IMR-90 (cell line): ENCODE measurements at regions of chr11 and their contacts with region 1.

Region 1: DNA sequence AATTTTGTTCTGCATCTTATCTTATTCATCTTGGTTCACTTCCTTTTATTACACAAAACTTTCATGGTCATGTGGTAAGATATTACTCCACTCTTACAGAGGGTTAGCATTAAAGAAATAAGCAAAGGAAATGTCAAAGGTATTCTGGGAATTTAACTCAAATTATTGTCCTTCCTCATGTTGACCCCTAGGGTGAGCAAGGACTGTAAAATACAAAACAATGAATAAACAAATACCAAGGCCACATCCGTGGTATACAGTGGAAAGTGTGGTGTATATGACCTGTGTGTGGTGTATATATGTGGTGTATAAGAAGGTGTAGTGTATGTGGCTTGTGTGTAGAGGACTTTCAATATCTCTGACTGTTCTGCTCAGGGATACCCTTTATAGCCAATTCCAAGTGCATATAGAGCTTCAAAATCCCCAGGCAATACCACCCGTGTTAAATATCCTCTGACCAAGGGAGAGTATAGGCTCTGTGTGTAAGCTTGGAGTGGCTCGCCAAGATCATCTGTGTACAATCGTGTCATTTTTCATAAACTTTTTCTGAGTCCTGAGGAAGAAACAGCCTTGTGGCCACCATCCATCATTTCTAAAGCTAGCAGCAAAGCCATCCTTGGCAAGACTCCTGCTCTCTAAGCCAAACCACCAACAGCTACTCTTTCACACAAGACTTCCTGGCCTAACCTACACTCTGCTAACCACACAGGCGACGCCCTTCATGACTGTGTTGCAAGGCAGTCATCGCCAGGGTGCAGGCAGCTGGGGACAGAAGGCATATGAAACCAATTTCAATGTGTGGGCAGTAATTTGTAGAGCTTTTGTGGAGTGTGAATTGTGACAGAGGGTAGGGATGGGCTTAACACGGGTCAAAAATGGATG is 548.0 kb downstream of the ETS1 start:
- DNase-seq: peak; percentile 82
- ATAC-seq: peak; percentile 77
- H3K4me3 ChIP-seq: no peak overlapping the region
- H3K27ac ChIP-seq: no peak overlapping the region
- H3K4me1 ChIP-seq: peaks cover 13% of the 10 kb centered on the region
- H3K27me3 ChIP-seq: peaks cover 3% of the 10 kb centered on the region; the same call in 1 of the 2 replicates
- CTCF ChIP-seq: 0 out of 2 replicates have a peak, but pooled peaks have one; percentile 5
- POLR2A ChIP-seq: no peak
- RAD21 ChIP-seq: no peak

Region 2: DNA sequence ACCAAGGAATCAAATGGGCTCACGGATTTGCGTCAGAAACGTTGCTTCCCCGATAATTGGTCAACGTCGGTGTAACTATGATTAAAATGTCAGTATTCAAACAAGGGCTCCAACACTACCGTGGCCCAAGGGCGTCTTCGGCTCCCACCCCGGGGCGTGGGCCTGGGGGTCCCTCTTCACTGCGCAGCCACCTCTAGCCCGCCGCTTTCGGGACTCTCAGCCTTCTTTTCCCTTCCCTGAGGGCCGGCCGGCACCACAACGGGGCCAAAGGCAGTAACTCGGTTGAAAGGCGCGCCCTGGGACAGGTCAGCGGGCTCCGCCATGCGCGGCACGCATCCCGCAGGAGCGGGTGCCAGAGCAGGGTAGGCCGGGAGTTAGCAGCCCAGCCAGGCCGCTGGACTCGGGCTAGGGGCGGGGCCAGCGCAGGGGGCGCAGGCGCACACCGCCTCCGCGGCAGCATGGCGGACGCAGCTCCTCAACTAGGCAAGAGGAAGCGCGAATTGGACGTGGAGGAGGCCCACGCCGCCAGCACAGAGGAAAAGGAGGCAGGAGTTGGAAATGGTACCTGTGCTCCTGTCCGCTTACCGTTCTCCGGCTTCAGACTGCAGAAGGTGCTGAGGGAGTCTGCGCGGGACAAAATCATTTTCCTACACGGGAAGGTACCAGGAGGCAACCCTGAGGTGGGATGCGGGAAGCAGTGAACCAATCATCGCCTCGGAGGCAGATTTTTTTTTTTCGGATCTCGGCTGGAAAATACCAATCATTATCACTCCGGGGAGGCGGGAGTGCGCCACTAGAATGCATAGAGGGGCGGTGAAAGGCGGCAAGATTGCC is 1735.5 kb before region 1 on chr11 and contains the start of gene DCPS:
- CTCF ChIA-PET with region 1: no interaction called
- POLR2A ChIA-PET with region 1: no interaction called
- dilution Hi-C with region 1: no loop called
- in situ Hi-C with region 1: no loop called
- intact Hi-C with region 1: loop called (anchors 10 kb)
- DNase-seq: peak; percentile 88
- ATAC-seq: peak; percentile 99
- H3K4me3 ChIP-seq: peak within 1 kb of the TSS; percentile 55
- H3K27ac ChIP-seq: peak within 1 kb of the TSS; percentile 85
- H3K4me1 ChIP-seq: peaks cover 3% of the 10 kb centered on the region; the same call in 1 of the 2 replicates
- H3K27me3 ChIP-seq: no peaks in the 10 kb centered on the region
- CTCF ChIP-seq: no peak
- POLR2A ChIP-seq: peak; percentile 90
- RAD21 ChIP-seq: no peak
- total RNA-seq, gene DCPS: 18.6 and 19.7 TPM in 2 replicates

Region 3: GRCh38 chr11:128052912-128053641 is 13.7 kb after region 1 on chr11:
- CTCF ChIA-PET with region 1: interaction called, 3 read pairs
- POLR2A ChIA-PET with region 1: no interaction called
- dilution Hi-C with region 1: no loop called
- in situ Hi-C with region 1: no loop called
- intact Hi-C with region 1: loop called (anchors 1 kb)
- DNase-seq: peak; percentile 77
- ATAC-seq: peak; percentile 82
- H3K4me3 ChIP-seq: no peak overlapping the region
- H3K27ac ChIP-seq: peak overlapping the region; percentile 28; the same call in 1 of the 2 replicates
- H3K4me1 ChIP-seq: peaks cover 7% of the 10 kb centered on the region
- H3K27me3 ChIP-seq: no peaks in the 10 kb centered on the region
- CTCF ChIP-seq: no peak
- POLR2A ChIP-seq: no peak
- RAD21 ChIP-seq: no peak

Region 4: DNA sequence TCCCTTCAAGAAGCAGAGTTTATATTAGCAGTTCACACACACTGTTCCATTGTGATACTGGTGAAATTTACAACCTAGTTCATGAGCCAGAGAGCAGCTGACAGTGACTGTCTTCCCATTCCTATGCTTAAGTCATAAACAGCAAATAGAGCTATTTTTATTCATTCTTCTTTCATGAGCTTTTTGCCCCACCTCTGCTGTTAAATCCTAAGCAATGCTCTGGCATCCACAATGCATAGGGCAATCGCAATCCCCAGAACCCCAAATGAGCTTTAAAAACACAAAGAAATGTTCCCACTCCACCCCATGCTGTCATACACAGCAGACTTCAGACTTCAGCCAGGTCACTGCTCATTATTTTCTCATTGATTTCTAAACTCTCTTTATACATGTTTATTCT is 240.5 kb after region 1 on chr11:
- CTCF ChIA-PET with region 1: no interaction called
- POLR2A ChIA-PET with region 1: no interaction called
- dilution Hi-C with region 1: no loop called
- in situ Hi-C with region 1: loop called (anchors 10 kb)
- intact Hi-C with region 1: no loop called
- DNase-seq: peak; percentile 35
- ATAC-seq: no peak
- H3K4me3 ChIP-seq: no peak overlapping the region
- H3K27ac ChIP-seq: no peak overlapping the region
- H3K4me1 ChIP-seq: no peaks in the 10 kb centered on the region
- H3K27me3 ChIP-seq: peaks cover 3% of the 10 kb centered on the region; the same call in 1 of the 2 replicates
- CTCF ChIP-seq: no peak
- POLR2A ChIP-seq: no peak
- RAD21 ChIP-seq: no peak

Region 5: GRCh38 chr11:128399251-128400121 is 360.1 kb after region 1 on chr11:
- CTCF ChIA-PET with region 1: no interaction called
- POLR2A ChIA-PET with region 1: no interaction called
- dilution Hi-C with region 1: no loop called
- in situ Hi-C with region 1: loop called (anchors 25 kb)
- intact Hi-C with region 1: no loop called
- DNase-seq: peak; percentile 87
- ATAC-seq: peak; percentile 81
- H3K4me3 ChIP-seq: no peak overlapping the region
- H3K27ac ChIP-seq: no peak overlapping the region; the same call in 1 of the 2 replicates
- H3K4me1 ChIP-seq: peaks cover 5% of the 10 kb centered on the region
- H3K27me3 ChIP-seq: no peaks in the 10 kb centered on the region
- CTCF ChIP-seq: no peak
- POLR2A ChIP-seq: no peak
- RAD21 ChIP-seq: 0 out of 2 replicates have a peak, but pooled peaks have one; percentile 4

Region 6: GRCh38 chr11:128630367-128631230 is 591.2 kb after region 1 on chr11:
- CTCF ChIA-PET with region 1: no interaction called
- POLR2A ChIA-PET with region 1: no interaction called
- dilution Hi-C with region 1: no loop called
- in situ Hi-C with region 1: loop called (anchors 10 kb)
- intact Hi-C with region 1: no loop called
- DNase-seq: peak; percentile 86
- ATAC-seq: peak; percentile 96
- H3K4me3 ChIP-seq: no peak overlapping the region
- H3K27ac ChIP-seq: no peak overlapping the region
- H3K4me1 ChIP-seq: no peaks in the 10 kb centered on the region
- H3K27me3 ChIP-seq: peaks cover 4% of the 10 kb centered on the region
- CTCF ChIP-seq: peak; percentile 97
- POLR2A ChIP-seq: no peak
- RAD21 ChIP-seq: peak; percentile 97

Region 7: GRCh38 chr11:128956401-128957201 is 917.2 kb after region 1 on chr11:
- CTCF ChIA-PET with region 1: no interaction called
- POLR2A ChIA-PET with region 1: no interaction called
- dilution Hi-C with region 1: no loop called
- in situ Hi-C with region 1: loop called (anchors 25 kb)
- intact Hi-C with region 1: loop called (anchors 10 kb)
- DNase-seq: peak; percentile 78
- ATAC-seq: peak; percentile 83
- H3K4me3 ChIP-seq: no peak overlapping the region
- H3K27ac ChIP-seq: no peak overlapping the region
- H3K4me1 ChIP-seq: no peaks in the 10 kb centered on the region
- H3K27me3 ChIP-seq: peaks cover 10% of the 10 kb centered on the region
- CTCF ChIP-seq: peak; percentile 88
- POLR2A ChIP-seq: no peak
- RAD21 ChIP-seq: peak; percentile 90